Breast epithelium (tissue), 4 donors: ENCODE measurements at regions of chr20 and their contacts with region 1.

Region 1: GRCh38 chr20:41173161-41173721 is 35.9 kb downstream of the PLCG1 start:
- DNase-seq: peak; percentile 82 to 84
- H3K4me3 ChIP-seq: no peak overlapping the region
- H3K27ac ChIP-seq: peak overlapping the region; percentile 73 to 94
- H3K4me1 ChIP-seq: peaks cover 4 to 7% of the 10 kb centered on the region in 2 donors
- H3K27me3 ChIP-seq: no peaks in the 10 kb centered on the region
- CTCF ChIP-seq: peak; percentile 74 to 97 (median 96)
- POLR2A ChIP-seq: no peak

Region 2: DNA sequence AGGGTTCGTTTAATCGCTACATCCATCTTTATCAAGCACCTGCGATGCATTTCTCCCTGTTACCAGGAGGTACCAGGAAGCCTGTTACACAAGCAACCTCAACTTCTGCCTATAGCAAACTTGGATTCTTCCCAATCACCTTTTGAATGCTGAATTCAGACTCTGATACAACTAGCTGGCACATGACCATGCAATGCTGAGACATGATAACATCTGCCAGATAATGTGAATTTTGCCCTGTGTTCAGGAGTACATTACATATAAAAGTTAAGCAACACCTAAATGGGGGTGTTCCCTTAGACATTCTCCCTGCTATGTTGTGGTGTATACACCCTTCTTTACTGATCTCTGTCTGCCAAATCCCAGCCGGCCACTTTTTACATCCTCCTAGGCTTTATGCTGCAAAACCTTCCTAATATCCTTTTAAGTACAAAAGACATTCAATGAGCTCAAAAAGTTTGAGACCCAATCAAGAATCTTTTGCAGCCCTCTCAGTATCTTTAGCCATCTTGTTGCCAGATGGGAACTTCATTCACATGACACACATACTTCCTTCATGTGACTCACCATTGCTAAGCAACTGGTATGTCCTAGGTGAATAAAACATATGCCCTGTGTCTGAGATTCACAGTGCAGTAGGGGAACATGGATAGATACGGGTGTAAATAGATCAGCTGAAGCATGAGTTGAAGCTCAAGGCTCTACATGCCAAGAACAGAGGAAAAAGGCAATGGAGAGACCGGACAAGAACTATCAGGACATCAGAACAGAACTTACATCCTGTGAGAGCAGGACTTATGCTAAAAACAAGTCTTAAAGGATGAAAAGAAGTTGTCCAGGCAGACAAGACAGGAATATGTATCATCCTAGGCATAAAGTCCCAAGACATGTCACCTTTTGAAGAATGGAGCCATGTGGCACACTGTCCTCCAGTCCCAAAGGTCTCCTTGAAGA is 60.0 kb after region 1 on chr20:
- intact Hi-C with region 1: loop called (anchors 10 kb)
- DNase-seq: no peak
- H3K4me3 ChIP-seq: peak overlapping the region in 2 of 3 donors; percentile 36 to 55
- H3K27ac ChIP-seq: peak overlapping the region; percentile 86 to 92
- H3K4me1 ChIP-seq: peaks cover 0 to 3% of the 10 kb centered on the region in 2 donors
- H3K27me3 ChIP-seq: no peaks in the 10 kb centered on the region
- CTCF ChIP-seq: no peak
- POLR2A ChIP-seq: no peak

Region 3: GRCh38 chr20:41339507-41340326 is 166.5 kb after region 1 on chr20:
- intact Hi-C with region 1: loop called (anchors 5 kb)
- DNase-seq: peak; percentile 89 to 93
- H3K4me3 ChIP-seq: peak overlapping the region; percentile 47 to 73 (median 58)
- H3K27ac ChIP-seq: peak overlapping the region; percentile 88 to 94
- H3K4me1 ChIP-seq: peaks cover 3 to 21% of the 10 kb centered on the region in 2 donors
- H3K27me3 ChIP-seq: no peaks in the 10 kb centered on the region
- CTCF ChIP-seq: peak; percentile 99 to 100 (median 99)
- POLR2A ChIP-seq: no peak